WTC11 (cell line): ENCODE measurements at regions of chr16 and their contacts with region 1.

Region 1: GRCh38 chr16:25066747-25067631 is 44.6 kb upstream of the LCMT1 start:
- DNase-seq: peak; percentile 87
- ATAC-seq: peak; percentile 97
- H3K4me3 Mint-ChIP-seq: peak overlapping the region; percentile 85
- H3K27ac Mint-ChIP-seq: no peak overlapping the region
- H3K4me1 Mint-ChIP-seq: peaks cover 15% of the 10 kb centered on the region
- H3K27me3 Mint-ChIP-seq: peaks cover 32% of the 10 kb centered on the region
- CTCF ChIP-seq: no peak

Region 2: DNA sequence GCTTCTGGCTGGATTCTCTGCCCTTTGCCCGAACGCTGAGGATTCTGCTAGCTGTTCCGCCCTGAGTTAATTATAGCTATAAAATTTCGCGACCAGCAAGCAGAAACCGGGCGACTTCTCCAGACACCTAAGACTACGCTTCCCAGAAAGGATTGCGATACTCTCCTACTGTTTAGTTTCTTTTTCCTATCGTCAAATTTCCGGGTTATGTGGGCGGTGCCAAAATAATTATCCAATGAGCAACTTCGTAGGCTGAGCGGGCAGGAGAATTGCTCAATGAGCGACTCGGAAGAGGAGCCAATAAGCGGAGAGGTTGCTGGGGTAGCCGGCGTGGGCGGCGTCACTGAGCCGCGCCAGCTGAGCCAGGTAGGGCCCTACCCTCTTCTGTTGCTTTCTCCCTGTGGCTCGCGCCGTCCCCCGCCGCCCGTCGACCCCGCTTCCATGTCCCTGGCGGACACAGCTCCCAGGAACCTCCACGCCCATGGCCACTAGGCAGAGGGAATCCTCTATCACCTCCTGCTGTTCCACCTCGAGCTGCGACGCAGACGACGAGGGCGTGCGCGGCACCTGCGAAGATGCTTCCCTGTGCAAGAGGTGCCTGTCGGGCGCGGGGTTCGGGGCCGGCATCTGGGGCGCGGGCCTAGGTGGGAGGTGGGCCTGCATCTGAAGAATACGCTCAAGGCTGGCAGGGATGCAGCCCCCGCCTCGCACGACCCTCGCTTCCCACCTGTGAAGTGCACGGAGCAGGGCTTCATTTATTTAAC is 44.6 kb after region 1 on chr16 and contains the start of gene LCMT1:
- CTCF ChIA-PET with region 1: interaction called, 14 read pairs
- POLR2A ChIA-PET with region 1: interaction called, 6 read pairs
- DNase-seq: peak; percentile 91
- ATAC-seq: peak; percentile 88
- H3K4me3 Mint-ChIP-seq: peak within 1 kb of the TSS; percentile 93
- H3K27ac Mint-ChIP-seq: peak within 1 kb of the TSS; percentile 99
- H3K4me1 Mint-ChIP-seq: peaks cover 23% of the 10 kb centered on the region
- H3K27me3 Mint-ChIP-seq: no peaks in the 10 kb centered on the region; the same call in 1 of the 2 replicates
- CTCF ChIP-seq: no peak
- total RNA-seq, gene LCMT1: 86.3 to 89.6 TPM (median 86.7 TPM) in 3 replicates